ENCODE measurements at regions of chr3 and their contacts with region 1.

Region 1: GRCh38 chr3:49929331-49930240 is at the start of gene MON1A:
- DNase-seq: peak; percentile 97 to 98 (median 97)
- ATAC-seq: peak; percentile 95 to 100 (median 99)
- H3K4me3 ChIP-seq: peak within 1 kb of the TSS; percentile 66 to 93 (median 82)
- H3K27ac ChIP-seq: peak within 1 kb of the TSS; percentile 72 to 94 (median 89)
- H3K4me1 ChIP-seq: peaks cover 0 to 31% (median 21%) of the 10 kb centered on the region in 12 donors
- H3K27me3 ChIP-seq: no peaks in the 10 kb centered on the region
- CTCF ChIP-seq: peak in 9 of 12 donors; percentile 11 to 53 (median 28)
- POLR2A ChIP-seq: peak in 1 of 2 donors; percentile 76
- total RNA-seq, gene MON1A: 4.8 to 13.0 (median 7.7) TPM

Region 2: GRCh38 chr3:49313896-49314688 is 615.5 kb before region 1 on chr3:
- intact Hi-C with region 1: no loop called
- DNase-seq: no peak
- ATAC-seq: no peak
- H3K4me3 ChIP-seq: no peak overlapping the region
- H3K27ac ChIP-seq: no peak overlapping the region
- H3K4me1 ChIP-seq: peaks cover 0 to 8% (median 0%) of the 10 kb centered on the region in 12 donors
- H3K27me3 ChIP-seq: no peaks in the 10 kb centered on the region
- CTCF ChIP-seq: no peak
- POLR2A ChIP-seq: no peak

Region 3: DNA sequence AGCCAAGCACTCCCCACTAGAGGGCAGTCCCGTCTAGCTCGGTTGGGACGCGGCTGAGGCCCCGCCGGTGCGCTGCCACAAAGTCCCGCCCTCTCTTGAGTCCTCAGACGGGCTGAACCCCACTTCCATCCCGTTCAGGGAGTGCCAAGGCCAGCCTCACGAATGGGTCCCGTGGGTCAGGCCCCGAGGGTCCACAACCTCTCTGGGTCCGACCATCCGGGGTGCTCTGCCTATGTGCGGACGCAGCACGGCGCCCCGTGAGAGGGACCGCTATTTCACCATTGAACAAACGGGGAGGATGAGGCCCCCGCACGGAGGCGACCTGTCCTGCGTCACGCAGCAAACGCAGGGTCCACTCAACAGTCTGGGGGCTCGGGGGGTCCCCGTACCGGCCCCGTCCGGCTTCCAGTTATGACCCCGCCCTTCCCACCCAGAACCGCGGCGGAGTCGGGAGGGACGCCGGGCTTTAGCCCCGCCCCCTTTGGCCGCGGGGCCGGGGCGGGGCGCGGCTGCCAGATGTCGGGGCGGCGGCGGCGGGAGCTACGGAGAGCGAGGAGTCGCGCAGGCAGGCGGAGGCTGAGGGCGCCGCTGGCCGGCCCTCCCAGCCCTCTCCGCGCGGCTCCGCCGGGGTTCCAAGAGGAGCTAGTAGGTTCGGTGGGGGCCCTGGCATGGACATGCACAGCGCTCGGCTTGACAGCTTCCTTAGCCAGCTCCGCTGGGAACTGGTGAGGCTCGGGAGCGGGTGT is 126.7 kb before region 1 on chr3 and contains the start of gene INKA1:
- intact Hi-C with region 1: loop called in 1 of 10 experiments (anchors 5 kb)
- DNase-seq: peak; percentile 92 to 95 (median 93)
- ATAC-seq: peak; percentile 77 to 84 (median 82)
- H3K4me3 ChIP-seq: peak within 1 kb of the TSS; percentile 69 to 98 (median 84)
- H3K27ac ChIP-seq: peak within 1 kb of the TSS; percentile 86 to 99 (median 98)
- H3K4me1 ChIP-seq: peaks cover 23 to 58% (median 47%) of the 10 kb centered on the region in 12 donors
- H3K27me3 ChIP-seq: no peaks in the 10 kb centered on the region
- CTCF ChIP-seq: peak in 11 of 12 donors; percentile 88 to 97 (median 92)
- POLR2A ChIP-seq: peak in 1 of 2 donors; percentile 78
- total RNA-seq, gene INKA1: 1.1 to 5.0 (median 3.3) TPM

Region 4: DNA sequence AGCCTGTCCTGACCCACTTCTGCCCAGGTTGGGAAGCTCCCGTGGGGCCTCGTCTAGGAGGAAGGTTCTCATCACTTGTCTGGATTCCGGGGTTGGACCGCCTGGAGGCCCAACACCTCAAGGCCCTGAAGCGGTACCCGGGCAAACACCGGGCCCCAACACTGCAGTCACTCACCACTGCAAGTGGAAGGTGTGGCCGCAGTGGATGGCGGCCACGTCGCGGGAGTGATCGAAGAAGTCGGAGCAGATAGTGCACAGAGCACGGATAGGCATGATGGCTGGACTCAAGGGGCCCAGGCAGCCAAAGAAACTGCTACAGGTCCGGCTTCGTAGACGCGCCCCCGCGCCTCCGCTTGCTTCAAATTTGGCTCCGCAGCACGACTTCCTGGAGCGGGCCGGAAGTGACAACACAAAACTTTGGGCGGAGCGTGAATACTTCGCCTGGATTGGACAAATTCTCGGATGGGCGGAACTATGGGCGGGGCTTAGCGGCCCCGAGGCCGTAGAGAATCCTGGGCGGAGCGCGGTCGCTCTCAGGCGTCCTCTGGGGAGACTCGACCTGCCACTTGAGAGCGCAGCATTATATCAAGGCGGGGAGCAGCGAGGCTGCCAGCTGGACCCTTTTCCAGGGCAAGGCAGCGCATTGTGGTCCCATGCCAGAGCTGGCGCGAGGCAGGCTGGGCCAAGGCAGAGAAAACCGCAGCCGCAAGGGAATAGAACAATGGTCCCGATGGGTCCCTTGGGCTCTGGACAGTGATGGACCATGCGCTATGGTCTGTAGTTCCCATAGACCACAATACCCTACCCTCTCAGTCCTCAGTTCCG is 73.2 kb before region 1 on chr3 and contains the start of gene TRAIP:
- intact Hi-C with region 1: loop called in 1 of 10 experiments (anchors 2 kb)
- DNase-seq: peak; percentile 94 to 96 (median 95)
- ATAC-seq: peak; percentile 99 to 100 (median 100)
- H3K4me3 ChIP-seq: peak within 1 kb of the TSS; percentile 28 to 91 (median 61)
- H3K27ac ChIP-seq: peak within 1 kb of the TSS; percentile 34 to 88 (median 82)
- H3K4me1 ChIP-seq: peaks cover 0 to 14% (median 8%) of the 10 kb centered on the region in 12 donors
- H3K27me3 ChIP-seq: no peaks in the 10 kb centered on the region
- CTCF ChIP-seq: peak in 2 of 12 donors; percentile 15 to 24
- POLR2A ChIP-seq: peak in 1 of 2 donors; percentile 65
- total RNA-seq, gene TRAIP: 0.37 to 6.3 (median 0.99) TPM in 8 of 9 donors, not detected in the other